B cell (primary cell): ENCODE measurements at regions of chr1 and their contacts with region 1.

Region 1: GRCh38 chr1:20058531-20058930 is 11.5 kb upstream of the PLA2G5 start:
- DNase-seq: no peak
- ATAC-seq: peak; percentile 49
- H3K4me3 ChIP-seq: no peak overlapping the region
- H3K4me3 Mint-ChIP-seq: peak overlapping the region; percentile 46
- H3K27ac ChIP-seq: no peak overlapping the region
- H3K27ac Mint-ChIP-seq: peak overlapping the region; percentile 8
- H3K4me1 ChIP-seq: peaks cover 46% of the 10 kb centered on the region in 2 donors
- H3K4me1 Mint-ChIP-seq: peaks cover 41% of the 10 kb centered on the region
- H3K27me3 ChIP-seq: no peaks in the 10 kb centered on the region
- H3K27me3 Mint-ChIP-seq: no peaks in the 10 kb centered on the region
- CTCF ChIP-seq: no peak

Region 2: GRCh38 chr1:20078171-20078651 is 19.7 kb after region 1 on chr1:
- CTCF ChIA-PET with region 1: interaction called, 4 read pairs
- POLR2A ChIA-PET with region 1: interaction called, 6 read pairs
- intact Hi-C with region 1: loop called (anchors 2 kb)
- DNase-seq: peak; percentile 81
- ATAC-seq: peak; percentile 87
- H3K4me3 ChIP-seq: peak overlapping the region in 3 of 5 experiments; percentile 16 to 37 (median 25)
- H3K4me3 Mint-ChIP-seq: peak overlapping the region; percentile 57
- H3K27ac ChIP-seq: peak overlapping the region; percentile 68 to 83
- H3K27ac Mint-ChIP-seq: peak overlapping the region; percentile 78
- H3K4me1 ChIP-seq: peaks cover 88% of the 10 kb centered on the region in 2 donors
- H3K4me1 Mint-ChIP-seq: peaks cover 88% of the 10 kb centered on the region
- H3K27me3 ChIP-seq: no peaks in the 10 kb centered on the region
- H3K27me3 Mint-ChIP-seq: no peaks in the 10 kb centered on the region
- CTCF ChIP-seq: no peak

Region 3: GRCh38 chr1:20405893-20406604 is 347.5 kb after region 1 on chr1:
- CTCF ChIA-PET with region 1: no interaction called
- POLR2A ChIA-PET with region 1: no interaction called
- intact Hi-C with region 1: no loop called
- DNase-seq: peak; percentile 67
- ATAC-seq: peak; percentile 73
- H3K4me3 ChIP-seq: peak overlapping the region in 1 of 5 experiments; percentile 1
- H3K4me3 Mint-ChIP-seq: peak overlapping the region; percentile 68
- H3K27ac ChIP-seq: peak overlapping the region; percentile 67 to 68
- H3K27ac Mint-ChIP-seq: peak overlapping the region; percentile 82
- H3K4me1 ChIP-seq: peaks cover 33 to 45% of the 10 kb centered on the region in 2 donors
- H3K4me1 Mint-ChIP-seq: peaks cover 43% of the 10 kb centered on the region
- H3K27me3 ChIP-seq: peaks cover 0 to 22% (median 4%) of the 10 kb centered on the region in 4 experiments
- H3K27me3 Mint-ChIP-seq: peaks cover 34% of the 10 kb centered on the region
- CTCF ChIP-seq: no peak